GM10248 (cell line): ENCODE measurements at regions of chr11 and their contacts with region 1.

Region 1: GRCh38 chr11:74739546-74740270 is 8.5 kb upstream of the CHRDL2 start:
- DNase-seq: peak; percentile 76
- CTCF ChIP-seq: peak; percentile 91

Region 2: GRCh38 chr11:74720596-74721478 is 18.9 kb before region 1 on chr11:
- CTCF ChIA-PET with region 1: interaction called, 129 read pairs
- POLR2A ChIA-PET with region 1: no interaction called
- DNase-seq: no peak
- CTCF ChIP-seq: no peak

Region 3: DNA sequence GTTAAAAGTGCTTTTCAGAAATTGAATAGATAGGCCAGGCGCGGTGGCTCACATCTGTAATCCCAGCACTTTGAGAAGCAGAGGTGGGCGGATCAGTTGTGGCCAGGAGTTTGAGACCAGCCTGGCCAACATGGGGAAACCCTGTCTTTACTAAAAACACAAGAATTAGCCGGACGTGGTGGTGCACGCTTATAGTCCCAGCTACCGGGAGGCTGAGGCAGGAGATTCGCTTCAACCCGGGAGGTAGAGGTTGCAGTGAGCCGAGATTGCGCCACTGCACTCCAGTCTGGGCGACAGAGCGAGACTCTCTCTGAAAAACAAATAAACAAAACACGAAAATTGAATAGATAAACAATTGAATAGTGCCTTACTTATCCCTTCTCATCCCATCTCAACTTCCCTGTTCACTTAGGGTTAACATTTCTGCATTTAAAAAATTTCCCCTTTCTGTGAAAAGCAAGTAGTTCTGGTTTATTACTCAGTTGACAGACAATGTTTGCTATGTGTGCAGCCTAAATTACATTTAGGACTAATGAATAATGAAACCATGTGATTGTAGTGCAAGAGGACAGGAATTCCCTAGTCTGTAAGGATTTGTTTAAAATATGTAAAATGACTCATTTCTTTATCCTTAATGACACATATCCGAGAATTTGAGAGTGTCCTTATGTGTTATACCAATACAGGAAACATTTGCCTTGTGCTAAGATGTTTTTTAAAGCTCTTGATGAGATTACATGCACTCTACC is 15.0 kb after region 1 on chr11:
- CTCF ChIA-PET with region 1: interaction called, 28 read pairs
- POLR2A ChIA-PET with region 1: no interaction called
- DNase-seq: no peak
- CTCF ChIP-seq: no peak